Ovary (tissue), 10 donors: ENCODE measurements at regions of chr12 and their contacts with region 1.

Region 1: GRCh38 chr12:110940933-110941332 is 20.6 kb upstream of the MYL2 start:
- DNase-seq: no peak
- H3K4me3 ChIP-seq: no peak overlapping the region
- H3K27ac ChIP-seq: no peak overlapping the region
- H3K4me1 ChIP-seq: no peaks in the 10 kb centered on the region
- H3K27me3 ChIP-seq: no peaks in the 10 kb centered on the region
- CTCF ChIP-seq: no peak
- EP300 ChIP-seq: no peak
- POLR2A ChIP-seq: no peak

Region 2: GRCh38 chr12:110957652-110958051 is 16.7 kb after region 1 on chr12:
- intact Hi-C with region 1: no loop called
- DNase-seq: no peak
- H3K4me3 ChIP-seq: no peak overlapping the region
- H3K27ac ChIP-seq: no peak overlapping the region
- H3K4me1 ChIP-seq: no peaks in the 10 kb centered on the region
- H3K27me3 ChIP-seq: no peaks in the 10 kb centered on the region
- CTCF ChIP-seq: no peak
- EP300 ChIP-seq: no peak
- POLR2A ChIP-seq: no peak

Region 3: DNA sequence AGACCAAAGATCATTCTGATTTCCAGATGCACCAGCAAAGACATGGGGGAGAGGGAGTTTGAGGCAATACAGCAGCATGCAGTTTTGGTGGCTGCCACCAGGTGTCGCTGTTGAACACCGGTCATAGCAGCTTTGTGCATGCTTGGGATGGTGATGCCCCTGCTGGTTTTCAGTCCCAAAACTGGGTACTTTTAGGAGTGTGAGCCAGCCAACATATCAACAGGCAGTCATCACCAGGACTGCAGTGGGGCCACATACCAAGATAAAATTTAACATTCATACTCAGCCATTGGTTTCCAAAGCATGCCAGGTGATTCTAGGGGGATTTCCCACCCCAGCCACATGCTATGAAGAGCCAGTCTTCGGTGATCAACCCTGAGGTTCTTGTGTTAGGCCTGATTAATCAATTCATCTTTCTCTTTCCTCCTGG is 363.7 kb after region 1 on chr12:
- intact Hi-C with region 1: loop called in 1 of 4 experiments (anchors 5 kb)
- DNase-seq: no peak
- H3K4me3 ChIP-seq: no peak overlapping the region
- H3K27ac ChIP-seq: no peak overlapping the region
- H3K4me1 ChIP-seq: no peaks in the 10 kb centered on the region
- H3K27me3 ChIP-seq: no peaks in the 10 kb centered on the region
- CTCF ChIP-seq: no peak
- EP300 ChIP-seq: no peak
- POLR2A ChIP-seq: no peak

Region 4: GRCh38 chr12:111444925-111445725 is 504.2 kb after region 1 on chr12:
- intact Hi-C with region 1: no loop called
- DNase-seq: peak in 2 of 5 donors; percentile 22 to 39
- H3K4me3 ChIP-seq: no peak overlapping the region
- H3K27ac ChIP-seq: no peak overlapping the region
- H3K4me1 ChIP-seq: peaks cover 6% of the 10 kb centered on the region
- H3K27me3 ChIP-seq: no peaks in the 10 kb centered on the region
- CTCF ChIP-seq: no peak
- EP300 ChIP-seq: no peak
- POLR2A ChIP-seq: no peak